Naive thymus-derived CD8-positive, alpha-beta T cell (primary cell): ENCODE measurements at regions of chr6 and their contacts with region 1.

Region 1: GRCh38 chr6:127938701-127939100 is 37.8 kb upstream of the THEMIS start:
- DNase-seq: no peak
- ATAC-seq: no peak
- H3K4me3 Mint-ChIP-seq: peak overlapping the region in 3 of 10 donors; percentile 23 to 38 (median 28)
- H3K27ac Mint-ChIP-seq: peak overlapping the region; percentile 7 to 89 (median 66)
- H3K4me1 Mint-ChIP-seq: peaks cover 23 to 72% (median 67%) of the 10 kb centered on the region in 4 donors
- H3K27me3 Mint-ChIP-seq: no peaks in the 10 kb centered on the region

Region 2: GRCh38 chr6:127864701-127865100 is 74.0 kb before region 1 on chr6:
- POLR2A ChIA-PET with region 1: no interaction called
- DNase-seq: peak in 1 of 10 donors; percentile 6
- ATAC-seq: no peak
- H3K4me3 Mint-ChIP-seq: peak overlapping the region in 7 of 10 donors; percentile 0 to 62 (median 47)
- H3K27ac Mint-ChIP-seq: peak overlapping the region; percentile 42 to 90 (median 78)
- H3K4me1 Mint-ChIP-seq: peaks cover 38 to 82% (median 70%) of the 10 kb centered on the region in 4 donors
- H3K27me3 Mint-ChIP-seq: no peaks in the 10 kb centered on the region

Region 3: DNA sequence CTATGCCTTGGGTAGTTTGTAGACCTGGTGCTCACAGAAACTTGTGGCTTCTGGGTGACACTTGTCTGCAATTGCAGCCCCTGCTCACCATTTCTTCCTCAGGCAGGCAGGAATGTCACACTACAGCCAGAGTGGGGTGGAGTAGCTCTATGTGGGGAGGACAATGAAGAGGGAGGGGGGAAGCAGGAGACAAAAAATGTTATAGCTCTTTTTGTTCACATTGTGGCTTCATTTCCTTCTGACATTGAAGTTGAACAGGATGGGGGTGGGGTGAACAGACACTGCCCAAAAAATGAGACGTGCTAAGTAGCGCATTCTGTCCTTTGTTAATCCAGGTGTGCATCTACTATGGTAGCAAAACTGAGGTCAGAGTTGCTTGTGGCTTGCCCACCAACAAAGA is 37.8 kb before region 1 on chr6 and contains the start of gene THEMIS:
- POLR2A ChIA-PET with region 1: interaction called, 11 read pairs
- DNase-seq: peak in 9 of 10 donors; percentile 32 to 82 (median 72)
- ATAC-seq: peak; percentile 78 to 87
- H3K4me3 Mint-ChIP-seq: peak within 1 kb of the TSS; percentile 96 to 100 (median 98)
- H3K27ac Mint-ChIP-seq: peak within 1 kb of the TSS; percentile 93 to 99 (median 95)
- H3K4me1 Mint-ChIP-seq: peaks cover 27 to 65% (median 44%) of the 10 kb centered on the region in 4 donors
- H3K27me3 Mint-ChIP-seq: no peaks in the 10 kb centered on the region
- polyA plus RNA-seq, gene THEMIS: 168 to 212 (median 183) TPM

Region 4: DNA sequence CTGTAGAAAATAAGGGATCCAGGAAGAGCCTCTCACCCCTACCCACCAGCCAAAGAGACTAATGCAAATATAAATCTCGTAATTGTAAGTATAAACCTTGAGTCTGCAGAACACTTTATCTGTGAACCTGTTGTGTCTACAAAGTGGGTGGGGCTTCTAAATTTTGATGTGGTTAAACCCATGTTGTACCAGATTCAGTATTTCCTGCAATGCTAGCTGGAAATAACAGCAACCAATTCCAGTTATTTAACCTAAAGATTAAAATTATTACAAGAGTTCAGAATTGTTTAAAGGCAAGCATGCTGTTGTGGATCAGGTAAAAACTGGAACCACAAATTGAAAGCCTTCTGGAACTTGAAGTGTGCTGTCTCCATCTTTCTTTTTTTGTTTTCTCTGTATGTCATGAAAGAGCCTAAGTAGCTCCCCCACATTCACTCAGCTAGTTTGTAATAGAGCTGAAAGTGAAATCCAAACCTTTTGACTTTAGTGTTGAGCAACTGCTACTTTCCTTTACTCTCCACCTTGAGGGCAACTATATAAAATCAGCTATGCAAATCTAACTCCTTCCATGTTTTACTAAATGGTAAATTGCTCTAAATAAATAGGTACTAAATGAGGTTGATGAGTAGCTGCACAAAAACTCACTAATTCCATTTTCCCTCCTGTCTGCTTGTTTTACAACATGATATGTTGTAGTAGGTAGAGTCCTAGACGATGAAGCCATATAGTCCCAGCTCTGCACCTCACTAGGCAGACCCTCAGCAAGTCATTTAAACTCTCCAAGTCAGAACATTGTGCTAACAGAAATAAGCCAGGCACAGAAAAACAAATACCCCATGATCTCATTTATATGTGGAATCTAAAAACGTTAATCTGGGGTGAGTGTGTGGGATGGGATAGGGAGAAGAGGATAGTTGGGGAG is 19.9 kb before region 1 on chr6:
- POLR2A ChIA-PET with region 1: interaction called, 19 read pairs
- DNase-seq: peak in 7 of 10 donors; percentile 22 to 84 (median 64)
- ATAC-seq: peak; percentile 79 to 83
- H3K4me3 Mint-ChIP-seq: peak overlapping the region; percentile 85 to 99 (median 94)
- H3K27ac Mint-ChIP-seq: peak overlapping the region; percentile 71 to 98 (median 97)
- H3K4me1 Mint-ChIP-seq: peaks cover 33 to 87% (median 75%) of the 10 kb centered on the region in 4 donors
- H3K27me3 Mint-ChIP-seq: no peaks in the 10 kb centered on the region

Region 5: GRCh38 chr6:127951172-127951917 is 12.6 kb after region 1 on chr6:
- POLR2A ChIA-PET with region 1: interaction called, 102 read pairs
- DNase-seq: peak in 3 of 10 donors; percentile 62 to 79 (median 78)
- ATAC-seq: peak; percentile 81 to 90
- H3K4me3 Mint-ChIP-seq: peak overlapping the region; percentile 63 to 86 (median 79)
- H3K27ac Mint-ChIP-seq: peak overlapping the region; percentile 87 to 98 (median 92)
- H3K4me1 Mint-ChIP-seq: peaks cover 31 to 91% (median 70%) of the 10 kb centered on the region in 4 donors
- H3K27me3 Mint-ChIP-seq: no peaks in the 10 kb centered on the region

Region 6: GRCh38 chr6:127980996-127981395 is 42.3 kb after region 1 on chr6:
- POLR2A ChIA-PET with region 1: interaction called, 13 read pairs
- DNase-seq: no peak
- ATAC-seq: peak; percentile 3 to 7
- H3K4me3 Mint-ChIP-seq: peak overlapping the region; percentile 17 to 92 (median 74)
- H3K27ac Mint-ChIP-seq: peak overlapping the region in 9 of 10 donors; percentile 15 to 97 (median 85)
- H3K4me1 Mint-ChIP-seq: peaks cover 31 to 69% (median 62%) of the 10 kb centered on the region in 4 donors
- H3K27me3 Mint-ChIP-seq: no peaks in the 10 kb centered on the region

Region 7: DNA sequence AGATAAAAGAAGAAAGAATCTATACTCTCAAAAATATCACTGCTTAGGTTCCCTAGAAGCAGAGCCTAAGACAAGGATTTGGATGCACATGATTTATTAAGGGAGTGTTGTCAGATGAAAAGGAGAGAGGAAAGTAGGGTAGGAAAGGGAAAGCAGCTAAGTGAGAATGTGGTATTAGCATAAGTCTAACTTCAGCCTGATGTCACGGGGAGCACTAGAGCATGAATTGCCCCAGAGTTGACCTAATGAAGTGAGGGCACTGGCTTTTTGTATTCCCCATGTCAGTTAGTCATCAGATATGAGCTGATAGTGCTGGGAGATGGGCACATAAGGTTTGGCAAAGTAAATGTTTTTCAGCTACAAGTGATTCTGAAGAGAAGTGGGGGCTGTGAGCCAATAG is 91.1 kb after region 1 on chr6:
- POLR2A ChIA-PET with region 1: no interaction called
- DNase-seq: no peak
- ATAC-seq: no peak
- H3K4me3 Mint-ChIP-seq: peak overlapping the region in 2 of 10 donors; percentile 16 to 20
- H3K27ac Mint-ChIP-seq: peak overlapping the region in 7 of 10 donors; percentile 7 to 95 (median 23)
- H3K4me1 Mint-ChIP-seq: peaks cover 36 to 98% (median 72%) of the 10 kb centered on the region in 4 donors
- H3K27me3 Mint-ChIP-seq: no peaks in the 10 kb centered on the region